Activated CD4-positive, alpha-beta memory T cell treated with anti-CD3 and anti-CD28 coated beads for 36 hours (primary cell): ENCODE measurements at regions of chr4 and their contacts with region 1.

Region 1: GRCh38 chr4:102826890-102827673 is at the start of gene UBE2D3:
- DNase-seq: peak; percentile 97
- H3K4me3 Mint-ChIP-seq: no peak within 1 kb of the TSS
- H3K27ac Mint-ChIP-seq: no peak within 1 kb of the TSS
- H3K4me1 Mint-ChIP-seq: peaks cover 26% of the 10 kb centered on the region
- H3K27me3 Mint-ChIP-seq: no peaks in the 10 kb centered on the region
- total RNA-seq, gene UBE2D3: 415 to 447 TPM

Region 2: DNA sequence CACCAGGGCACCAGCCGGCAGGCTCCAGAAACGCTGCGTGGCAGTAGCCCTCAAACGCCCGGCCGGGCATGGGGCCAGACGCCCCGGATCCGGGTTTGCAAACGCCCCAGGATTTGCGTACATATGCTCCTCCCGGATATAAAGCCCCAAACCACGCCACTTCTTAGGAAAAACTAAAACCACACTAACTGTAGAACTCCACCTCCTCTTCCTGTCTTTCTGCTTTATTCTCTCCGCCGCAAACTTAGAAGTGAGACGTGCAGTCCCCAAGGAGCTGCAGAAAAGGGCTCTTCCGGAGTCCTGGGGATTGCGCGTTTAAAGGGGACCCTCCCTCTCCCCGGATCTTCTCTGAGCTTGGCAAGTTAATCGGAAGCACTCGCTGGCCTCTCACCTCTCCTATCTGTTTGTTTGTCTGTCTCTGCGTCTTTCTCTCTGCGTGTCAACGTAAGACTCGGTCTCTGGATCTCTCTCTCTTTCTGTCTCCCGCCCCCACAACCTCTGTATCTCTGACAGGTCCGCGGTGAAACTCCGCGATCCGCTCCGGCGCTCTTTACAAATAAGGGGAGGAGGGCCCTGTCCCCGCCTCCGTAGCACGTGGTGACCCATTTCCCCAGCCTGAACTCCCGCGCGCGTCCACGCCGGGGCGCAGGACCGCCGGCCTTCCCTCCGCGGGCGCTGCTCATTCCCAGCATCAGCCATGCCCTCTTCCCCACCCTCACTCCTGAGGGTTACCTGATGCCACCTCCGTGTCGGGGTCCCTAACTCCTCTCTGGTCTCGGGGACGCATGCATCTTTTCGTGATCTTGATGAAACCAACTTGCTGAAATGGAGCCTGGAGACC is 481.9 kb before region 1 on chr4 and contains the start of gene SLC39A8:
- CTCF ChIA-PET with region 1: interaction called, 4 read pairs
- POLR2A ChIA-PET with region 1: interaction called, 13 read pairs
- intact Hi-C with region 1: loop called (anchors 1 kb)
- DNase-seq: peak; percentile 95
- H3K4me3 Mint-ChIP-seq: peak within 1 kb of the TSS; percentile 78
- H3K27ac Mint-ChIP-seq: peak within 1 kb of the TSS; percentile 96
- H3K4me1 Mint-ChIP-seq: peaks cover 43% of the 10 kb centered on the region
- H3K27me3 Mint-ChIP-seq: peaks cover 1% of the 10 kb centered on the region
- total RNA-seq, gene SLC39A8: 64.6 to 66.9 TPM

Region 3: GRCh38 chr4:102610007-102610406 is 217.1 kb before region 1 on chr4:
- CTCF ChIA-PET with region 1: interaction called, 3 read pairs
- POLR2A ChIA-PET with region 1: interaction called, 6 read pairs
- intact Hi-C with region 1: loop called (anchors 5 kb)
- DNase-seq: no peak
- H3K4me3 Mint-ChIP-seq: no peak overlapping the region
- H3K27ac Mint-ChIP-seq: peak overlapping the region; percentile 31
- H3K4me1 Mint-ChIP-seq: peaks cover 86% of the 10 kb centered on the region
- H3K27me3 Mint-ChIP-seq: no peaks in the 10 kb centered on the region

Region 4: GRCh38 chr4:102657206-102657605 is 169.9 kb before region 1 on chr4:
- CTCF ChIA-PET with region 1: no interaction called
- POLR2A ChIA-PET with region 1: no interaction called
- intact Hi-C with region 1: no loop called
- DNase-seq: no peak
- H3K4me3 Mint-ChIP-seq: no peak overlapping the region
- H3K27ac Mint-ChIP-seq: no peak overlapping the region
- H3K4me1 Mint-ChIP-seq: no peaks in the 10 kb centered on the region
- H3K27me3 Mint-ChIP-seq: no peaks in the 10 kb centered on the region

Region 5: DNA sequence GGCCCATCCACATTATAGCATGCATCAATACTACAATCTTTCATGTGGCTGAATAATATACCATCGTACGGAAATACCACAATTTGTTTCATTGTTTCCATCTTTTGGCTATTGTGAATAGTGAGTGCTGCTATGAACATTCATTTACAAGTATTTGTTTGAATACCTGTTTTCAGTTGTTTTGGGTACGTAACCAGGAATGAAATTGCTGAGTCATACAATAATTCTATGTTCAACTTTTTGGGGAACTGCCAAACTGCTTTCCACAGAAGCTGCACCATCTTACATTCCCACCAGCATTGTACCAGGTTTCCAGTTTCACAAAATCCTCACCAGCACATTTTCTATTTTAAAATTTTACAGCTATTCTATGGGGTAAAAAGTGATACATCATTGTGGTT is 37.8 kb before region 1 on chr4:
- CTCF ChIA-PET with region 1: interaction called, 3 read pairs
- POLR2A ChIA-PET with region 1: interaction called, 20 read pairs
- intact Hi-C with region 1: loop called (anchors 1 kb)
- DNase-seq: peak; percentile 14
- H3K4me3 Mint-ChIP-seq: no peak overlapping the region
- H3K27ac Mint-ChIP-seq: peak overlapping the region; percentile 67
- H3K4me1 Mint-ChIP-seq: peaks cover 46% of the 10 kb centered on the region
- H3K27me3 Mint-ChIP-seq: no peaks in the 10 kb centered on the region

Region 6: DNA sequence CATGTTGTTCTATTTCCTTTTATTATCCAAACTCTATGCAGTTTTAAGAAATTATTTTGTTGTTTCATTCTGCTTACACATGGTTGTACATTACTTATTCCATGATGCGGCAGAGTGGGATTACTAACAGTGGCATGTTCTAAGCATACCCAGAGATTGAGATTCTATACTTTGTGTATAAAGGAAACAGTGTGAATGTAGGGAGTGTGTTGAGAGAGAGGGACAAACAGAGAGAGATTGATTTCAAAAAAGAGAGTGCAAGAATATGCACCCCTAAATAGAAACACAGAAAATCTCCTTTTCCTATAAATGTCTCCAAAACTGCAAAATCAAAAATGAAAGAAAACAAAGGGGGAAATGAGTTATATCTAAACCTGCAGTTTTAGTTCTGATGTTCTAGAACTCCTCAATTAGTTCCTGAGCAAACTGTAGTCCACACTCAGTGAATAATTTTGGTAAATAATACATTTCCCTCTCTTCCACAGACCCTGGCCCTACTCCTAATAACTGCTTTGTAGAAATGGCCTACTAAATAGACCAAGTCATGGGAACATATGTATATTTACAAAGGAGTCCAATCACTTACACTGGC is 161.4 kb after region 1 on chr4:
- CTCF ChIA-PET with region 1: interaction called, 3 read pairs
- POLR2A ChIA-PET with region 1: no interaction called
- intact Hi-C with region 1: loop called (anchors 5 kb)
- DNase-seq: no peak
- H3K4me3 Mint-ChIP-seq: no peak overlapping the region
- H3K27ac Mint-ChIP-seq: peak overlapping the region; percentile 70
- H3K4me1 Mint-ChIP-seq: peaks cover 10% of the 10 kb centered on the region
- H3K27me3 Mint-ChIP-seq: no peaks in the 10 kb centered on the region

Region 7: DNA sequence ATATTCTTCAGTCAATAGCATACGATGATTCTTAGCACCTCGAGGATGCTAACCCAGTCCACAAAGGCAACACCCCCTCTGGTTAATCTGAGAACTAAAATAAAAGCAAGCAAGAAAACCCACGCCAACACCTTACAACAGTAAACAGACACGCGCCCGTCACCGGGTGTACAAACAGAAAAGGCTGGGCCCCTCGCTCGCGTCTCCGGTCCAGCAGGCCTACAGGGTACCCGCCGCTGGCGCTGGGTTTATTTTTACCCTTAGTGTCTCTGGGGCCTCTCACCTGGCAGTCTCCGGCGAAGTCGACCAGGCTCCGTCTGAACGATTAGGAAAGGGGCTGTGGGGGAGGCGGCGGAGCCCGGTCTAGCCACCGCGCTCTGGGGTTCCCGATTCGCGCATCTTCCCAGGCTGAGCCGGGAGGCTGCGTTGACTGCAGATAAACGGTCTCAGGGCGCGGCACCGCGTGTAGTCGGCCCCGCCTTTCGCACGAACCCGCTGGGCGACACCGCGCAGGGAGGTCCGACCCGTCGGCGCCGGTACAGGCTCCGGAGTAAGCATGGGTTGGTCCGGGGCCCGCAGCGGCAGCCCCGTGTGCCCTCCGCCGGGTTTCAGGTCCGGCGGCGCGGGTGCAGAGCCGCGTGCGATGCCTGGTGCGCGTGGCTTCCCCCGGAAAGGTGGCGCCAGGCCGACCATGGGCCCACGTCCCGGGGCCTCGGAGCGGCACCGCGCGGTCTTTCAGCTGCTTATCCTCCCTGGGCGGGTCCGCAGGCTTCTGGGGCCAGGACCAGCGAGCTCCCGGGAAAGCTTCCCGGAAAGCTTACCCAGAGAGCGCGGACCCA is 249.0 kb after region 1 on chr4:
- CTCF ChIA-PET with region 1: no interaction called
- POLR2A ChIA-PET with region 1: interaction called, 3 read pairs
- intact Hi-C with region 1: loop called (anchors 1 kb)
- DNase-seq: peak; percentile 72
- H3K4me3 Mint-ChIP-seq: peak overlapping the region; percentile 79
- H3K27ac Mint-ChIP-seq: peak overlapping the region; percentile 99
- H3K4me1 Mint-ChIP-seq: peaks cover 42% of the 10 kb centered on the region
- H3K27me3 Mint-ChIP-seq: no peaks in the 10 kb centered on the region

Region 8: GRCh38 chr4:103645991-103646390 is 818.9 kb after region 1 on chr4:
- CTCF ChIA-PET with region 1: no interaction called
- POLR2A ChIA-PET with region 1: no interaction called
- intact Hi-C with region 1: no loop called
- DNase-seq: no peak
- H3K4me3 Mint-ChIP-seq: no peak overlapping the region
- H3K27ac Mint-ChIP-seq: no peak overlapping the region
- H3K4me1 Mint-ChIP-seq: no peaks in the 10 kb centered on the region
- H3K27me3 Mint-ChIP-seq: no peaks in the 10 kb centered on the region